Activated CD8-positive, alpha-beta T cell treated with anti-CD3 and anti-CD28 coated beads for 36 hours (primary cell): ENCODE measurements at regions of chr12 and their contacts with region 1.

Region 1: GRCh38 chr12:10073261-10073660 is 25.5 kb downstream of the CLEC1A start:
- DNase-seq: no peak
- ATAC-seq: no peak
- H3K4me3 Mint-ChIP-seq: no peak overlapping the region
- H3K27ac Mint-ChIP-seq: no peak overlapping the region
- H3K4me1 Mint-ChIP-seq: no peaks in the 10 kb centered on the region
- H3K27me3 Mint-ChIP-seq: peaks cover 16% of the 10 kb centered on the region
- CTCF ChIP-seq: no peak

Region 2: DNA sequence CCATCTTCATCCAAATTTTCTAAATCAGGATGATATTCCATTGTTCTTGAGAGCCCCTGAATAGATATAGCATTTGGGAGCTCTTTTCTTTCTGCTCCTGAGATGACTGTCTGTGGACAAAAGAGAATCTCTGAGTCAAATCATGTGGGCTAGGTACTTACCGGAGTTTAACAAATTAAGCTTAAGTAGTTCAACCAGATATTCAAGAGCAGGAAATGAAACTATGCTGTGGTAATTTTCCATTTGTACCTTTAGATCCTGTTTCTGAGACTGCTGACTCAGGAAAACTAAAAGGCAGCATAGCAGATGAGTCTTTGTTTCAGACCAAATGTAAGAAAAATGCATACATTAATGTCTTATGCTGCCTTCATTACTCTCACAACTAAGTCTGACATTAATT is 56.8 kb after region 1 on chr12 and contains the start of gene CLEC7A:
- CTCF ChIA-PET with region 1: no interaction called
- POLR2A ChIA-PET with region 1: no interaction called
- intact Hi-C with region 1: loop called (anchors 2 kb)
- DNase-seq: no peak
- ATAC-seq: peak; percentile 89
- H3K4me3 Mint-ChIP-seq: no peak within 1 kb of the TSS
- H3K27ac Mint-ChIP-seq: no peak within 1 kb of the TSS
- H3K4me1 Mint-ChIP-seq: peaks cover 13% of the 10 kb centered on the region
- H3K27me3 Mint-ChIP-seq: peaks cover 10% of the 10 kb centered on the region
- CTCF ChIP-seq: no peak
- total RNA-seq, gene CLEC7A: not detected

Region 3: GRCh38 chr12:10175846-10176636 is 102.8 kb after region 1 on chr12:
- CTCF ChIA-PET with region 1: no interaction called
- POLR2A ChIA-PET with region 1: no interaction called
- intact Hi-C with region 1: no loop called
- DNase-seq: no peak
- ATAC-seq: no peak
- H3K4me3 Mint-ChIP-seq: no peak overlapping the region
- H3K27ac Mint-ChIP-seq: no peak overlapping the region
- H3K4me1 Mint-ChIP-seq: no peaks in the 10 kb centered on the region
- H3K27me3 Mint-ChIP-seq: peaks cover 7% of the 10 kb centered on the region
- CTCF ChIP-seq: no peak

Region 4: DNA sequence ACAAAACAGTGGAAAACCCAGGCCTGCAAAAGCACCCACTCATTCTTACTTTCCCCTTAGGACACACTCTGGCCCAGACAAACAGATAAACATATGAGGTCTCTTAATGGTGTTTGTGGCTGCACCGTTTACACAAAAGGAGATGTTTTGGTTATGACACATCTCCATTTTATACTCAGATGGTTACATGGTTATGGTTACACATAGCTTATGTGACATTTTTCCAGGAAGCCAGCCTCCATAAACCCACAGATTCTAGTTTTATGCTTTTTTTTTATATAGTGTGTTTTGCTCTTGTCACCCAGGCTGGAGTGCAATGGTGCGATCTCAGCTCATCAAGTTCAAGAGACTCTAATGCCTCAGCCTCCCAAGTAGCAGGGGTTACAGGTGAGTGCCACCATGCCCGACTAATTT is 230.9 kb after region 1 on chr12:
- CTCF ChIA-PET with region 1: no interaction called
- POLR2A ChIA-PET with region 1: no interaction called
- intact Hi-C with region 1: no loop called
- DNase-seq: peak; percentile 79
- ATAC-seq: peak; percentile 76
- H3K4me3 Mint-ChIP-seq: peak overlapping the region; percentile 26
- H3K27ac Mint-ChIP-seq: peak overlapping the region; percentile 74
- H3K4me1 Mint-ChIP-seq: peaks cover 66% of the 10 kb centered on the region
- H3K27me3 Mint-ChIP-seq: no peaks in the 10 kb centered on the region
- CTCF ChIP-seq: no peak